Right ventricle myocardium superior (tissue), 1 donor: ENCODE measurements at regions of chr18 and their contacts with region 1.

Region 1: GRCh38 chr18:23812546-23813440 is 123.5 kb downstream of the LAMA3 start:
- DNase-seq: no peak
- ATAC-seq: no peak

Region 2: DNA sequence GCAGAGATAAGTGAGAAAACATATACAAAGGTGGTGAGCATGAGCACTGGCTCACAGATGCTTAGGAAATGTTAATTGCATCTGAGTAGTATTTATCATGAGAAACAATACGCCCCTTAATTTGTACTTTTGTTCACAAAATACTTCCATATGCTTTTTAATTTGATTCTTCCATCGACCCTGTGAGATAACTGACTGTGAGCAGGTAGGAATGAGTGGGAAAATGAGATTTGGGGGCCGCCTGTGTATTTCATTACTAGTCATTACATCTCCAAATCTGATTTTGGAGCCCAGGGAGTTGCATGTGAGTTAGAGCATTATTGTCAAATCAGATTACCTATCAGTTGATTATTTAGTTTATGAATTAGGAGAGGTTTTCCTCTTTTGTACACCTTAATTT is 189.8 kb before region 1 on chr18:
- intact Hi-C with region 1: loop called (anchors 5 kb)
- DNase-seq: no peak
- ATAC-seq: no peak